ENCODE measurements at regions of chr7 and their contacts with region 1.

Region 1: GRCh38 chr7:123494193-123494796 is 40.1 kb downstream of the IQUB start:
- DNase-seq: peak in 18 of 35 experiments; percentile 4 to 68 (median 12)
- ATAC-seq: peak in 1 of 4 experiments; percentile 52
- H3K4me3 ChIP-seq: no peak overlapping the region
- H3K4me3 Mint-ChIP-seq: no peak overlapping the region
- H3K27ac ChIP-seq: no peak overlapping the region
- H3K27ac Mint-ChIP-seq: no peak overlapping the region
- H3K4me1 ChIP-seq: no peaks in the 10 kb centered on the region
- H3K4me1 Mint-ChIP-seq: peaks cover 0 to 2% (median 0%) of the 10 kb centered on the region in 3 donors
- H3K27me3 ChIP-seq: peaks cover 2 to 4% of the 10 kb centered on the region in 2 experiments
- H3K27me3 Mint-ChIP-seq: peaks cover 15 to 16% of the 10 kb centered on the region in 2 donors

Region 2: DNA sequence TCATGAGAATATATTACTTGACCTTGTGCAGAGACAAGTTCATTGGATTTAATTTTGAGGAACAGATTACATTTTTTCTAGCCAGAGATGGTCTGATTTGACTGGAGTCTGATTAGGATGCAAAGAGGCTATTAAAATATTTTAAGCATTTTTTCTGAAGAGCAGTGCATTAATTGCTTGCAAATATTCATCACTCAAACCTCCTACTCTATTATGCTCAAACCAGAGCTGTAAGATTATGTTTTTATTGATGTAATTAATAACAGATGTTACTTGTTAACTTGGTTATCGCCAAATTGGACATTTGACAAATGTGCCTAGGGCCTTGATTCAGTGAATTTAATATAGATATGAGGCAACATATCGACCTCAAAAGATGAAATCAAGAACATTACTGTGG is 133.7 kb before region 1 on chr7:
- CTCF ChIA-PET with region 1: no interaction called
- POLR2A ChIA-PET with region 1: no interaction called
- DNase-seq: no peak
- ATAC-seq: no peak
- H3K4me3 ChIP-seq: no peak overlapping the region
- H3K4me3 Mint-ChIP-seq: no peak overlapping the region
- H3K27ac ChIP-seq: no peak overlapping the region
- H3K27ac Mint-ChIP-seq: no peak overlapping the region
- H3K4me1 ChIP-seq: no peaks in the 10 kb centered on the region
- H3K4me1 Mint-ChIP-seq: no peaks in the 10 kb centered on the region
- H3K27me3 ChIP-seq: no peaks in the 10 kb centered on the region
- H3K27me3 Mint-ChIP-seq: no peaks in the 10 kb centered on the region

Region 3: DNA sequence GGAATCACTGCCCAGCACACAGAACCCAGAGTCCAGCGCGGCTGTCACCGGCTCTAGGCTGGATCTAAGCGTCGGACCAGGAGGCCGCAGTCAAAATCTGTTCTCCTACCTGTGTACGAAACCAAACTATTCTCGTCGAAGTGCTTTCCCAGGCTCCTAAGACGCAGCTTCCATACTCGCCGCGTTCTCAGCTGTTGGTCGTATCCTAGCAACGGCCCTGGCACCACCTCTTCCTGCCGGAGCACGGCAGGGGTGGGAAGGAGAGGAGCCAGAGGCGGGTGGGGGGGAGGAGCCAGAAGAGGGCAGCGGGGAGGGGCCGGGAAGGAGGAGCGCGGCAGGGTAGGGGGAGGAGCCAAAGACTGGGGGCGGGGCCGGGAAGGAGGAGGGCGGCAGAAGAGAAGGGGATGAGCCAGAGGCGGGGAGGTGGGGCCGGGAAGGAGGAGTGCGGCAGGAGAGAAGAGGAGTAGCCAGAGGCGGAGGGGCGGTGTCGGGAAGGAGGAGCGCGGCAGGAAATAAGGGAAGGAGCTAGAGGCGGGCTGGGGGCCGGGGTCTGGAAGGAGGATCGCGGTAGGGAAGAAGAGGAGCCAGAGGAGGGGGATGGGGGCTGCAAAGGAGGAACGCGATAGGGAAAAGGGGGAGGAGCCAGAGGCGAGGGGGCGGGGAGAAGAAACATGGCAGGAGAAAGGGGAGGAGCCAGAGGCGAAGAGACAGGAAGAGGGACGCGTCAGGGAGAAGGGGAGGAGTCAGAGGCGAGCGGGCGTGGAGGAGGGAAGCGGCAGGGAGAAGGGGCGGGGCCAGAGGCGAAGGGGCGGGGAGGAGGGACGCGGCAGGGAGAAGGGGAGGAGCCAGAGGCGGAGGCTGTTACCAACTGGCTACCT is 40.3 kb after region 1 on chr7 and contains the start of gene IQUB:
- CTCF ChIA-PET with region 1: interaction called, 15 to 29 read pairs
- POLR2A ChIA-PET with region 1: interaction called, 3 to 8 read pairs
- DNase-seq: peak; percentile 72 to 96 (median 87)
- ATAC-seq: peak; percentile 79 to 91 (median 83)
- H3K4me3 ChIP-seq: peak within 1 kb of the TSS; percentile 41 to 80
- H3K4me3 Mint-ChIP-seq: peak within 1 kb of the TSS; percentile 84 to 91 (median 84)
- H3K27ac ChIP-seq: peak within 1 kb of the TSS; percentile 47
- H3K27ac Mint-ChIP-seq: peak within 1 kb of the TSS; percentile 70 to 87
- H3K4me1 ChIP-seq: peaks cover 3 to 23% of the 10 kb centered on the region in 2 experiments
- H3K4me1 Mint-ChIP-seq: peaks cover 22 to 27% (median 24%) of the 10 kb centered on the region in 3 donors
- H3K27me3 ChIP-seq: peaks cover 4 to 17% of the 10 kb centered on the region in 2 experiments
- H3K27me3 Mint-ChIP-seq: peaks cover 7 to 17% of the 10 kb centered on the region in 2 donors
- total RNA-seq, gene IQUB: 0.09 TPM in 2 of 5 donors, not detected in the others

Region 4: DNA sequence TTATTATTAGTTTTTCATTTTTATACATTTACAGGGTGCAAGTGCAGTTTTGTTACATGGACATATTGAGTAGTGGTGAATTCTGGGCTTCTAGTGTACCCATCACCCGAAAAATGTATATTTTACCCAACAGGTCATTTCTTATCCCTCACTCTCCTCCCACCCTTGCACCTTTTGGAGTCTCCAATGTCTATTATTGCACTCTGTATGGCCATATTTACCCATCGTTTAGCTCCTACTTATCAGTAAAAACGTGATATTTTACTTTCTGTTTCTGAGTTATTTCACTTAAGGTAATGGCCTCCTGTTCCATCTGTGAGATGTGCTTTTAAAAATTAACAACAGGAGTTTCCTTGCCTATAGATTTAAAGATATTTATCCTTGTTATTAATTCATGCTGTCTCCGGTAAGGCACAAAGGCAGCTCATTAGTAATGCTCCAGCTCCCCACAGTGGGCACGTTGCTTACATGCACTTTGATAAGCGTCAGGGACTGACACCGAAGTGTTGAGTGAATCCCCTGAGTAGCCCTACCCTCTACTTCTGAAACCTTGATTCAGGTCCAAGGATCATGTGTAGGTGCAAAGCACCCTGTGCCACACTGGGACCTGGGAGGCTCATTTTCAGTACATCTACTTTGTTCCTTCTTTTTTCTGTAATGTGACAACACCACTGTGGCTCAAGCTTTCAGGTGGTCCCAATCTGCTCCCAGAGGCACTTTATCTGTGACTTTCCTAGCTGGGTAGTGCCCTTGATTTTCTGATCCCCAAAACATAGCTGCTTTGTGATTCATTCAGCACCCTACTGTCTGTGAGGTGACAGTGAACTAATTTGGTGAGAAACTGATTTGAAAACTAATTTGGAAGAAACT is 377.9 kb after region 1 on chr7:
- CTCF ChIA-PET with region 1: interaction called, 7 to 16 read pairs
- POLR2A ChIA-PET with region 1: no interaction called
- DNase-seq: peak in 20 of 35 experiments; percentile 1 to 53 (median 8)
- ATAC-seq: peak in 3 of 4 experiments; percentile 33 to 43 (median 40)
- H3K4me3 ChIP-seq: no peak overlapping the region
- H3K4me3 Mint-ChIP-seq: no peak overlapping the region
- H3K27ac ChIP-seq: no peak overlapping the region
- H3K27ac Mint-ChIP-seq: no peak overlapping the region
- H3K4me1 ChIP-seq: no peaks in the 10 kb centered on the region
- H3K4me1 Mint-ChIP-seq: peaks cover 0 to 2% (median 0%) of the 10 kb centered on the region in 3 donors
- H3K27me3 ChIP-seq: peaks cover 0 to 6% of the 10 kb centered on the region in 2 experiments
- H3K27me3 Mint-ChIP-seq: peaks cover 6 to 9% of the 10 kb centered on the region in 2 donors

Measured in T-cell (primary cell).